ENCODE measurements at regions of chrX and their contacts with region 1.

Region 1: DNA sequence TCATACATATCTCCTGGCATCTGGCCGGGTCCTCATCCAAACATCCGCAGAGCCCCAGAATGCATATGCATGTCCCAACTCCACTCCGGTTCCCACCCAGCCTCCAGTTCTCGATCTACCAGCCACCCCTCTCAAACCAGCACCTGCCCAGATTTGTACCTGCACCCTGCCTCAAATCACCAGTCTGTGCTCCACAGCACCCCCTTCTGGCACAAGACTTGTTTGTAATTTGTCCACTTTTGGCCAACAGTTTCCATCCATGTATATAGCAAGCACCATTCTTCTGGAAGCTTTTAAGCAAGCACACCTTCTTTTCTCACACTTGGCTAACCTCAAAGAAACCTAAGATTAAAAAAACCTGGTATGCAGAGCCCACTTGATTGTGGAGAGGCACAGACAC is 644.1 kb downstream of the MID1IP1 start:
- DNase-seq: peak in 3 of 4 experiments; percentile 16 to 51 (median 18)
- ATAC-seq: 0 out of 3 replicates have a peak, but pooled peaks have one; percentile 44
- H3K4me3 ChIP-seq: no peak overlapping the region
- H3K27ac ChIP-seq: no peak overlapping the region
- H3K4me1 ChIP-seq: peaks cover 4 to 27% of the 10 kb centered on the region in 2 experiments; a peak in 3 of 5 replicates
- H3K27me3 ChIP-seq: no peaks in the 10 kb centered on the region
- CTCF ChIP-seq: peak; percentile 42 to 60 (median 48)
- EP300 ChIP-seq: no peak
- POLR2A ChIP-seq: no peak
- RAD21 ChIP-seq: peak; percentile 8 to 35; a peak in 2 of 4 replicates

Region 2: DNA sequence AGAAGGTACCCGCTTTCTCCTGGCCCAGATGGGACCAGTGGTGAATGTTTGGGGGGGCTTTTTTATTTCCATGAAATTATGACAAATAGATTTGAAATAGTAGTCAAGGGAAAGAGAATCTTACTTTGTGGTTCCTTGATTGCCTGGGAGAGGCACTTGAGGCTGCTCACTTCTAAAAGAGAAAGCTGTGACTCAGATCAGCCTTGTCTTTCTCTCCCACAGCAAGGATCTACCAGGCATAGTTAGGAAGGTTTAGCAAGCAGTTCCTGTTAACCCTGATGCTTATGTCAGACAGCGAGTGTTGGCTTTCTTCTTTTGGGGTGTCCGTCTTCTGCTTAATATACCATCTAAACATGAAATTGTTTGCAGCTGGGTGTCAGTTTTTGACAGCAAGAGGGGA is 769.5 kb before region 1 on chrX:
- CTCF ChIA-PET with region 1: no interaction called
- POLR2A ChIA-PET with region 1: no interaction called
- in situ Hi-C with region 1: loop called (anchors 10 kb)
- intact Hi-C with region 1: no loop called
- DNase-seq: no peak
- ATAC-seq: no peak
- H3K4me3 ChIP-seq: no peak overlapping the region
- H3K27ac ChIP-seq: no peak overlapping the region
- H3K4me1 ChIP-seq: no peaks in the 10 kb centered on the region
- H3K27me3 ChIP-seq: no peaks in the 10 kb centered on the region; a peak in 1 of 5 replicates
- CTCF ChIP-seq: no peak
- EP300 ChIP-seq: no peak
- POLR2A ChIP-seq: no peak
- RAD21 ChIP-seq: no peak

Region 3: GRCh38 chrX:39261446-39262147 is 183.7 kb before region 1 on chrX:
- CTCF ChIA-PET with region 1: no interaction called
- POLR2A ChIA-PET with region 1: no interaction called
- in situ Hi-C with region 1: no loop called
- intact Hi-C with region 1: loop called (anchors 5 kb)
- DNase-seq: peak; percentile 24 to 45 (median 34)
- ATAC-seq: peak; percentile 62; the same call in 1 of the 3 replicates
- H3K4me3 ChIP-seq: no peak overlapping the region
- H3K27ac ChIP-seq: no peak overlapping the region
- H3K4me1 ChIP-seq: peaks cover 0 to 2% of the 10 kb centered on the region in 2 experiments; a peak in 3 of 5 replicates
- H3K27me3 ChIP-seq: no peaks in the 10 kb centered on the region
- CTCF ChIP-seq: peak; percentile 36 to 51 (median 50); a peak in 5 of 6 replicates
- EP300 ChIP-seq: no peak
- POLR2A ChIP-seq: no peak
- RAD21 ChIP-seq: peak; percentile 50 to 56

Measured in K562 (cell line).